Pancreas (tissue), 10 donors: ENCODE measurements at regions of chr9 and their contacts with region 1.

Region 1: DNA sequence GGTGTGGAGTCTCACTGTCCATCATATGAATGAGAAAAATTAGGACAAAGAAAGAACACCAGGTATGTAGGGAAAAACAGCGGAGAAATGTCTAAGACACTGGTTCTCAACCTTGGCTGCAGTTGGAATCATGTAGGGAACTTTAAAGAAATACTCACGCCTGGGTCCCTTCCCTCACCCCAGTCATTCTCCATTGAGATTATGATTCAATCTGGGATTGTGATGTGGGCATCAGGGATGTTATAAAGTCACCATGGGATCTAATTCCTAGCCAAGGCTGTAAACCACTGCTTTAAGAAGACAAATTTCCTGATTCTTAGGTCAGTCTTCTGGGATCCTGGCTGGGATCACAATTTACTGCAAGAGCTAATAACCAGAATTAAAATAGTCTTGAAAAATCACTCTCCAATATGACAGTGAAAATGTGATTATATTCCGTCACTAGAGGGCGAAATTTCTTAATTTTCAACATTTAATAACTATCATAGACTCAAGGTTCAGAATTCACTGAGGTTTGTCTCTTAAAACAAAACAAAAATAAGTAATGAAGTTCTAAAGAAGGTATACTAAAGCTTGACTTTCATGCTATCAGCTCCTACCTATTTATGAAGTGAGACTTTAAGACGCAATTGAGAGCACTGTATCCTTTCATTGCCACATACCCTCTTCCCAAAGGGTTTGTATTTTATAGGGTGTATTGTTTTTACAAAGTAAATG is 60.5 kb downstream of the GLDC start:
- DNase-seq: no peak
- ATAC-seq: peak in 3 of 4 donors; percentile 48 to 66 (median 58)
- H3K4me3 ChIP-seq: no peak overlapping the region
- H3K27ac ChIP-seq: no peak overlapping the region
- H3K4me1 ChIP-seq: no peaks in the 10 kb centered on the region
- H3K27me3 ChIP-seq: no peaks in the 10 kb centered on the region
- CTCF ChIP-seq: peak in 3 of 4 donors; percentile 31 to 49 (median 39)

Region 2: GRCh38 chr9:6667633-6668280 is 82.7 kb after region 1 on chr9:
- intact Hi-C with region 1: loop called in 1 of 3 experiments (anchors 10 kb)
- DNase-seq: no peak
- ATAC-seq: peak in 3 of 4 donors; percentile 42 to 62 (median 44)
- H3K4me3 ChIP-seq: no peak overlapping the region
- H3K27ac ChIP-seq: no peak overlapping the region
- H3K4me1 ChIP-seq: no peaks in the 10 kb centered on the region
- H3K27me3 ChIP-seq: no peaks in the 10 kb centered on the region
- CTCF ChIP-seq: peak in 3 of 4 donors; percentile 26 to 50 (median 37)

Region 3: GRCh38 chr9:6739218-6739617 is 154.2 kb after region 1 on chr9:
- intact Hi-C with region 1: loop called in 1 of 3 experiments (anchors 10 kb)
- DNase-seq: no peak
- ATAC-seq: peak in 3 of 4 donors; percentile 51 to 55 (median 52)
- H3K4me3 ChIP-seq: no peak overlapping the region
- H3K27ac ChIP-seq: no peak overlapping the region
- H3K4me1 ChIP-seq: no peaks in the 10 kb centered on the region
- H3K27me3 ChIP-seq: no peaks in the 10 kb centered on the region
- CTCF ChIP-seq: no peak